ENCODE measurements at regions of chr1 and their contacts with region 1.

Region 1: DNA sequence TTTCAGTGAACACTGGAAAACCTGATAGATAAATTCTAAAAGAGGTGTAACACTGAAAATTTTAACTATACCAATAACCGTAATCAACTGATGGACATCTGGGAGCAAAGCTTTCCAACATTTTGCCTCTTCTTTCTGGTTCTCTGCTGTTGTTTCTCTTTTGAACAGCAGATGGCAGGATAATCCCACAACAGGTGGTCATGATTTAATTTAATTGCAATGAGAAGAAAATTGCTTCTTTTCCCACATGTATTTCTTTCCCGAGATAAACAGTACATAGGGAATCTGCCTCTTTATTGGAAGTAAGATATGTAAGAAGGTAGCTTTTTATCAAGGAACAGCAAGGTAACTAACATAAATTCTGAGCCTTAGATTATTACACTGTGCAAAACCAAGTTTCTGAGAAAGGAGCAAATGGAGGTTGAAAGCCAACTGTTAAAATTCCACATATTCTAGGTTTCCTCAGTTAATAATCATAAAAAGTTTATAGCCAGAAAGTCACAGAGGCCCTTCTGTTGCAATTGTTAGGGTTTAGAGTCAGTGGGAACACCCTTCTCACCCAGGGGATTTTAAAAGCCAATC is 72.9 kb downstream of the RPS6KA1 start:
- DNase-seq: peak in 7 of 9 donors; percentile 43 to 73 (median 65)
- ATAC-seq: peak; percentile 71
- H3K4me3 ChIP-seq: no peak overlapping the region
- H3K4me3 Mint-ChIP-seq: peak overlapping the region in 1 of 10 donors; percentile 41
- H3K27ac ChIP-seq: no peak overlapping the region
- H3K27ac Mint-ChIP-seq: peak overlapping the region in 2 of 9 donors; percentile 21 to 72
- H3K4me1 ChIP-seq: peaks cover 0 to 3% of the 10 kb centered on the region in 2 donors
- H3K4me1 Mint-ChIP-seq: peaks cover 0 to 16% (median 9%) of the 10 kb centered on the region in 7 donors
- H3K27me3 ChIP-seq: no peaks in the 10 kb centered on the region
- H3K27me3 Mint-ChIP-seq: peaks cover 0 to 9% (median 0%) of the 10 kb centered on the region in 5 donors

Region 2: GRCh38 chr1:26500488-26501175 is 101.8 kb before region 1 on chr1:
- CTCF ChIA-PET with region 1: interaction called, 8 read pairs
- POLR2A ChIA-PET with region 1: interaction called, 7 read pairs
- intact Hi-C with region 1: loop called in 1 of 2 experiments (anchors 1 kb)
- DNase-seq: peak; percentile 76 to 97 (median 86)
- ATAC-seq: peak; percentile 89
- H3K4me3 ChIP-seq: peak overlapping the region; percentile 95
- H3K4me3 Mint-ChIP-seq: peak overlapping the region; percentile 67 to 91 (median 88)
- H3K27ac ChIP-seq: peak overlapping the region; percentile 90
- H3K27ac Mint-ChIP-seq: peak overlapping the region; percentile 67 to 95 (median 91)
- H3K4me1 ChIP-seq: peaks cover 16% of the 10 kb centered on the region in 2 donors
- H3K4me1 Mint-ChIP-seq: peaks cover 1 to 31% (median 11%) of the 10 kb centered on the region in 7 donors
- H3K27me3 ChIP-seq: no peaks in the 10 kb centered on the region
- H3K27me3 Mint-ChIP-seq: no peaks in the 10 kb centered on the region

Region 3: DNA sequence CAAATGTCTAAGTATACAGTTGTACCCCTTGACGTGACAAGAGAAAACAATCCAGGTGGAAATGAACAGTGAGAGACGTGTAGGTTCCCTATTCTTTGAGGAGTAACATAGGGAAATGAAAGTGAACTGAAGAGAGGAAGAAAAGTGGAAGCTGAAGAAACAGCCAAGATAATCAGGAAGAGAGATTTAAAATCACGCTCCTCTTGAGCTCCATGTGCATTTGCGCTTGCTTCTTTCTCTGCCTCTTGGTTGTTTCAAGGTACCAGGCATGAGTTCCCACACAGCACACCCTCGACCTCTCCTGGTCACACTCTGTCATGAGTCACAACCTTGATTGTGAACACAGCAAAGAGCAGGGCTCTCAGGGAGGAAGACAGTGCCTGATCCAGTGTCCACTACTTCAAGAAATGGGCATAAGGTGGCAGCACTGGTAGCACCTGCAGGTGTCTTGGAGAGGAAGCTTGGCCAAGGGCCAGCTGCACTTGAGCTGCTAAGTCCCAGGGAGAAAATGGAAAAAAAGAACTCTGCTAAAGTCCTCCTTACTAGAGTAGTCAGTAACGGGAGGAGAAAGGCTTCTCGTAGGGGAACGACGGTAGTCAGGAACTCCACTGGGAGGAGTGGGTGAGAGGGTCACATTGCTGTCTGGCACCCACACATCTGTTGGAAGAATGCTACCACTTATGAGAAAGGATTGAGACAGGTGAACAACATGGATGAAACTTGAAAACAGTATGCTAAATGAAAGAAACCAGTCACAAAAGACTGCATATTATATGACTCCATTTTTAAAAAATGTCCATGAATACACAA is 75.0 kb after region 1 on chr1:
- CTCF ChIA-PET with region 1: interaction called, 15 read pairs
- POLR2A ChIA-PET with region 1: interaction called, 5 read pairs
- intact Hi-C with region 1: loop called in 1 of 2 experiments (anchors 1 kb)
- DNase-seq: peak; percentile 23 to 62 (median 50)
- ATAC-seq: peak; percentile 96
- H3K4me3 ChIP-seq: no peak overlapping the region
- H3K4me3 Mint-ChIP-seq: peak overlapping the region; percentile 36 to 83 (median 67)
- H3K27ac ChIP-seq: no peak overlapping the region
- H3K27ac Mint-ChIP-seq: peak overlapping the region; percentile 6 to 89 (median 78)
- H3K4me1 ChIP-seq: peaks cover 0 to 13% of the 10 kb centered on the region in 2 donors
- H3K4me1 Mint-ChIP-seq: peaks cover 11 to 24% (median 17%) of the 10 kb centered on the region in 7 donors
- H3K27me3 ChIP-seq: no peaks in the 10 kb centered on the region
- H3K27me3 Mint-ChIP-seq: no peaks in the 10 kb centered on the region

Region 4: GRCh38 chr1:26833432-26834405 is 231.2 kb after region 1 on chr1:
- CTCF ChIA-PET with region 1: interaction called, 8 read pairs
- POLR2A ChIA-PET with region 1: interaction called, 4 read pairs
- intact Hi-C with region 1: loop called in 1 of 2 experiments (anchors 1 kb)
- DNase-seq: peak; percentile 59 to 95 (median 88)
- ATAC-seq: peak; percentile 97
- H3K4me3 ChIP-seq: peak overlapping the region; percentile 59
- H3K4me3 Mint-ChIP-seq: peak overlapping the region; percentile 69 to 87 (median 84)
- H3K27ac ChIP-seq: peak overlapping the region; percentile 99
- H3K27ac Mint-ChIP-seq: peak overlapping the region; percentile 95 to 100 (median 99)
- H3K4me1 ChIP-seq: peaks cover 49% of the 10 kb centered on the region in 2 donors
- H3K4me1 Mint-ChIP-seq: peaks cover 50 to 75% (median 64%) of the 10 kb centered on the region in 7 donors
- H3K27me3 ChIP-seq: no peaks in the 10 kb centered on the region
- H3K27me3 Mint-ChIP-seq: no peaks in the 10 kb centered on the region

Region 5: DNA sequence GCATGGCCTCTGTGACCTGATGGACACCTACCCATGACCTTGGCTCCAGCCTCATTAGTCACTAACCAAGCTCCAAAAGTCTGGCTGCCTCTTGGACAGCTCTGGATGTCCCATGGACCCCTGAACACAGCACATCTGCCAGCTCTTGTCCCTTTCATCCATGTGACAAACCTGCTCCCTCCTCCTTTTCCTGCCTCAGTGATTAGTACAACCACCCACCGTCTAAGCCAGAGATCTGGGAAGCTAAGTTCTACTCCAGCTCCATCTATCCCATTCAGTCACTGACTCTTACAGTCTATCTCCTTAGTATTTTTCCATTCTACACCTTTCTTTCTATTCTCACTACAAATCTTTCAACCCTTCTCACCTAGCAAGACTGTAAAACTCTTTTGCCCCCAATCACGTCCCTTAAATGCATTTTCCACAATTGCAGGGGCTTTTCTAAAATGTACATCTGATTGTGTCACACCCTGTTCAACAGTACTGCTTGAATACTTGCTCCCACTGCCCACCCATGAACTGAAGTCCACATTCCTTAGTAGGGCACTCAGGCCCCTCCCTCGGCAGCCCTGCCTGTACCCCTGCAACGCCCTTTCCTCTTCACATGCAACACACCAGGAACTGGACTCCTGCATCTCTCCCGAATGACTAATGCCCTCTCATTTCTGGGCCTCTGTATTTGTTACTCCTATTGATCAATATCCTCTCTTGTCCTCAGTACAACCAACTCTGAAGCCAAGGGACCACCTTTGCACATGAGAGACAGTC is 280.4 kb after region 1 on chr1:
- CTCF ChIA-PET with region 1: interaction called, 15 read pairs
- POLR2A ChIA-PET with region 1: no interaction called
- intact Hi-C with region 1: loop called (anchors 1 to 2 kb)
- DNase-seq: no peak
- ATAC-seq: no peak
- H3K4me3 ChIP-seq: no peak overlapping the region
- H3K4me3 Mint-ChIP-seq: no peak overlapping the region
- H3K27ac ChIP-seq: no peak overlapping the region
- H3K27ac Mint-ChIP-seq: peak overlapping the region in 4 of 9 donors; percentile 10 to 34 (median 13)
- H3K4me1 ChIP-seq: no peaks in the 10 kb centered on the region
- H3K4me1 Mint-ChIP-seq: peaks cover 6 to 17% (median 10%) of the 10 kb centered on the region in 7 donors
- H3K27me3 ChIP-seq: no peaks in the 10 kb centered on the region
- H3K27me3 Mint-ChIP-seq: no peaks in the 10 kb centered on the region

Measured in naive thymus-derived CD4-positive, alpha-beta T cell (primary cell).